CD4-positive, alpha-beta memory T cell (primary cell): ENCODE measurements at regions of chr2 and their contacts with region 1.

Region 1: GRCh38 chr2:168751104-168751740 is 51.2 kb upstream of the NOSTRIN start:
- DNase-seq: peak; percentile 73 to 81 (median 77)
- H3K4me3 ChIP-seq: no peak overlapping the region
- H3K4me3 Mint-ChIP-seq: peak overlapping the region in 7 of 8 donors; percentile 37 to 75 (median 69)
- H3K27ac ChIP-seq: peak overlapping the region; percentile 30
- H3K27ac Mint-ChIP-seq: peak overlapping the region; percentile 80 to 97 (median 93)
- H3K4me1 ChIP-seq: peaks cover 80% of the 10 kb centered on the region
- H3K4me1 Mint-ChIP-seq: peaks cover 61 to 87% (median 78%) of the 10 kb centered on the region in 4 donors
- H3K27me3 ChIP-seq: no peaks in the 10 kb centered on the region
- H3K27me3 Mint-ChIP-seq: no peaks in the 10 kb centered on the region

Region 2: DNA sequence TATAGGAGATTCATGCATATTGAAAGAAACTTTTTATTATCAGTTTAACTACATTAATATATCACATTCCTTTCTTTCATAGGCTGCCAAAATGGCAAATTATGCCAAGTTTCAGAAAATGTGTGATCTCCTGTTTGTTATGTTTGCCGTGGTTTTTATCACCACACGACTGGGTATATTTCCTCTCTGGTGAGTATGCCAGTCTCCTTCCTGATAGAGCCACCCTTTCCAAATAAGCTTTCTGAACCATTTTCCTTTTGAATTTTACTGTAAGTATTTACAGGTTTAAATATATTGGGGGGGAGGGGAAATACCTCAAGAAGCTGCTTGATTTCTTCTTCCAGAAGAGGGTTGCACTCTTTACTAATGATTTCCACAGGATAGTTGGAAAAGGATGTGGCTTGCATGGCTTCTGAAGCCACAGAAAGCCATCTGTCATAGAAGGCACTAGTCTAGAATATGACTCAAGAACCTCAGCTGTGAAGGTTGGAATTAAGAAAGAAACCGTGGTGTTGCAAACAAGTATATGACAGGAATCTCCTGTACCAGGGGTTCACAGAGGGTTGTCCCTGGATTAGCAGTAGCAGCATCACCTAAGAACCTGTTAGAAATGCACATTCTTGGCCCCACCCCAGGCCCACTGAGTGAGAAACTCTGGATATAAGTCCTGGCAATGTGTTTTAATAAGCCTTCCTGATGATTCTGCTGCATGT is 33.3 kb before region 1 on chr2:
- CTCF ChIA-PET with region 1: no interaction called
- POLR2A ChIA-PET with region 1: interaction called, 4 read pairs
- intact Hi-C with region 1: loop called (anchors 5 kb)
- DNase-seq: peak in 1 of 5 donors; percentile 1
- H3K4me3 ChIP-seq: no peak overlapping the region
- H3K4me3 Mint-ChIP-seq: peak overlapping the region in 3 of 8 donors; percentile 19 to 24 (median 22)
- H3K27ac ChIP-seq: no peak overlapping the region
- H3K27ac Mint-ChIP-seq: peak overlapping the region in 4 of 7 donors; percentile 8 to 32 (median 25)
- H3K4me1 ChIP-seq: peaks cover 14% of the 10 kb centered on the region
- H3K4me1 Mint-ChIP-seq: peaks cover 12 to 29% (median 20%) of the 10 kb centered on the region in 4 donors
- H3K27me3 ChIP-seq: no peaks in the 10 kb centered on the region
- H3K27me3 Mint-ChIP-seq: no peaks in the 10 kb centered on the region

Region 3: DNA sequence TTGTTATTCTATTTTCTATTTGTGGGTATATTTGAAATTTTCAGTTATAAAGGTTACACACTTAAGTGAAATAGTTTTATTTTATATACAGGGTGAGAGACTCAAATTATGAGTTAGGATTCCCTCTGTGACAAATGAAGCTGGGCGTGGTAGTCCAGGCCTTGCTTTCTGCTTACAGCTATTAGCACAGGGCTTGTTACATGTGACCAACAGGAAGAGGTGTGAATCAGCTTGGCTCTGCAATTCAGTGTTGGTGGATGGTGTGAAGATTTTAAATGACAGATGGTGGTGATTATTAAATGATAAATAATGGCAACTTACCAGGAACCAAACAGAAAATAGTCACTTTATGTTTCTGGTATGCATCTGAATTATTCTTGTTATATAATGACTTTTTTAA is 13.2 kb before region 1 on chr2:
- CTCF ChIA-PET with region 1: interaction called, 16 read pairs
- POLR2A ChIA-PET with region 1: interaction called, 4 read pairs
- intact Hi-C with region 1: no loop called
- DNase-seq: no peak
- H3K4me3 ChIP-seq: no peak overlapping the region
- H3K4me3 Mint-ChIP-seq: peak overlapping the region in 1 of 8 donors; percentile 36
- H3K27ac ChIP-seq: no peak overlapping the region
- H3K27ac Mint-ChIP-seq: peak overlapping the region in 3 of 7 donors; percentile 20 to 77 (median 47)
- H3K4me1 ChIP-seq: peaks cover 13% of the 10 kb centered on the region
- H3K4me1 Mint-ChIP-seq: peaks cover 13 to 34% (median 24%) of the 10 kb centered on the region in 4 donors
- H3K27me3 ChIP-seq: no peaks in the 10 kb centered on the region
- H3K27me3 Mint-ChIP-seq: peaks cover 0 to 1% of the 10 kb centered on the region in 2 donors